ENCODE measurements at regions of chr17 and their contacts with region 1.

Region 1: GRCh38 chr17:69235338-69235930 is 6.8 kb upstream of the ABCA10 start:
- DNase-seq: peak; percentile 94
- H3K4me3 ChIP-seq: no peak overlapping the region
- H3K27ac ChIP-seq: no peak overlapping the region
- H3K4me1 ChIP-seq: no peaks in the 10 kb centered on the region
- CTCF ChIP-seq: peak; percentile 100

Region 2: DNA sequence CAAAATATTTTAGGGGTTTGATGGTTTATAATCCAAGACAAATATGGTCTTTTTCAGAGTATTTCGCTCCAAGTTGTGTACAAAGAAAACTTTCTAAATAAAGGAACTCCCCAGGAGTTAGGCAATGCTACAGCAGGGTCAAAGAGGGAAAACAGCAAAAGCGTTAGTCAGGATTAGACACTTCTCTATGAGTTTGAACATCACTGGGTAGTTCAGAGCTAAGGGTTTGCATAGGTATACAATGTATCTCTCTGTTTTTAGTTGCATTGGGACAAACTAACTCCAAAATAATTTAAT is 669.0 kb before region 1 on chr17:
- CTCF ChIA-PET with region 1: no interaction called
- POLR2A ChIA-PET with region 1: no interaction called
- intact Hi-C with region 1: loop called (anchors 10 kb)
- DNase-seq: no peak
- H3K4me3 ChIP-seq: no peak overlapping the region
- H3K27ac ChIP-seq: no peak overlapping the region
- H3K4me1 ChIP-seq: peaks cover 10% of the 10 kb centered on the region
- CTCF ChIP-seq: no peak

Region 3: GRCh38 chr17:68972119-68972704 is 263.2 kb before region 1 on chr17:
- CTCF ChIA-PET with region 1: no interaction called
- POLR2A ChIA-PET with region 1: interaction called, 3 read pairs
- intact Hi-C with region 1: loop called (anchors 5 kb)
- DNase-seq: peak; percentile 33
- H3K4me3 ChIP-seq: no peak overlapping the region
- H3K27ac ChIP-seq: no peak overlapping the region
- H3K4me1 ChIP-seq: no peaks in the 10 kb centered on the region
- CTCF ChIP-seq: peak; percentile 90

Region 4: DNA sequence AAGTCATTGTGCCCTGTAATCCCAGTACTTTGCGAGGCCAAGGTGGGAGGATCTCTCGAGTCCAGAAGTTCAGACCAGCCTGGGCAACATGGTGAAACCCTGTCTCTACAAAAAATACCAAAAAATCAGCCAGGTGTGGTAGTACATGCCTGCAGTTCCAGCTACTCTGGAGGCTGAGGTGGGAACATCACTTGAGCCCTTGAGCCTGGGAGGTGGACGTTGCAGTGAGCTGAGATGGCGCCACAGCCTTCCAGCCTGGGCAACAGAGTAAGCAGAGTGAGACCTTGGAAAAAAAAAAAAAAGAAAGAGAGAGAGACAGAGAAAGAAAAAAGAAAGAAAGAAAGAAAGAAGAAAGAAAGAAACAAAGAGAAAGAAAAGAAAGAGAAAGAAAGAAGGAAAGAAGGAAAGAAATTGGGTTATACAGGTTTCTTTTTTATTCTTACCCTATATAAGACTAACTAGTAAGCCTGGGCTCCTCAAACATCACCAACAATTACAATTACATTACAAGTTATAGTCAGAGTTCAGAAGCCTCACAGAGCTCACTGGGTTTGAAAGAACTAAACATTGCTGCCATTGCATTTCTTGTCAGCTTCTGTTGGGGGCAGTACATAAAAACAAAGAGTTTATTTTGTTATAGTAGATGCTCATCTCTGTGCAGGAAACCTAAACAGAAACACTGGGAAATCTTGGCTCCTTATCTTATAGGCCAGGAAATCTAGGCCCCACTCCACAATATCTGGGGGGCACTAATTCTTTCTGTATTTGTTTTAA is 168.0 kb before region 1 on chr17:
- CTCF ChIA-PET with region 1: no interaction called
- POLR2A ChIA-PET with region 1: no interaction called
- intact Hi-C with region 1: loop called (anchors 5 kb)
- DNase-seq: peak; percentile 52
- H3K4me3 ChIP-seq: no peak overlapping the region
- H3K27ac ChIP-seq: no peak overlapping the region
- H3K4me1 ChIP-seq: peaks cover 18% of the 10 kb centered on the region
- CTCF ChIP-seq: peak; percentile 77

Region 5: GRCh38 chr17:69300222-69300621 is 64.8 kb after region 1 on chr17:
- CTCF ChIA-PET with region 1: no interaction called
- POLR2A ChIA-PET with region 1: no interaction called
- intact Hi-C with region 1: no loop called
- DNase-seq: no peak
- H3K4me3 ChIP-seq: no peak overlapping the region
- H3K27ac ChIP-seq: no peak overlapping the region
- H3K4me1 ChIP-seq: no peaks in the 10 kb centered on the region
- CTCF ChIP-seq: no peak

Region 6: GRCh38 chr17:69388822-69389442 is 153.5 kb after region 1 on chr17:
- CTCF ChIA-PET with region 1: no interaction called
- POLR2A ChIA-PET with region 1: no interaction called
- intact Hi-C with region 1: no loop called
- DNase-seq: no peak
- H3K4me3 ChIP-seq: no peak overlapping the region
- H3K27ac ChIP-seq: no peak overlapping the region
- H3K4me1 ChIP-seq: no peaks in the 10 kb centered on the region
- CTCF ChIP-seq: no peak

Measured in OCI-LY7 (cell line).